GM12878 (cell line): ENCODE measurements at regions of chr12 and their contacts with region 1.

Region 1: DNA sequence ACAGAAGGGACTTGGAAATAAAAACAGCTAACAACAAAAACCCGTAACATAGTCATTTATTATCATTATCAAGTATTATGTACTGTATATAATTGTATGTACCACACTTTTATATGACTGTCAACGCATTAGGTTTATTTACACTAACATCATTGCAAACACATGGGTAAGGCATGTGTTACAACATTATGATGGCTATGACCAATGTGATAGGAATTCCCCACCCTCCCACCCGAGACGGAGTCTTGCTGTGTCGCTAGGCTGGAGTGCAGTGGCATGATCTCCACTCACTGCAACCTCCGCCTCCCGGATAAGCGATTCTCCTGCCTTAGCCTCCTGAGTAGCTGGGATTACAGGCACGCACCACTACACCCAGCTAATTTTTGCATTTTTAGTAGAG is 82.6 kb downstream of the ERC1 start:
- DNase-seq: no peak
- ATAC-seq: no peak
- H3K4me3 ChIP-seq: no peak overlapping the region
- H3K27ac ChIP-seq: no peak overlapping the region
- H3K4me1 ChIP-seq: no peaks in the 10 kb centered on the region; the same call in 1 of the 2 replicates
- H3K27me3 ChIP-seq: peaks cover 0 to 2% of the 10 kb centered on the region in 2 experiments; a peak in 1 of 4 replicates
- CTCF ChIP-seq: no peak
- EP300 ChIP-seq: no peak
- POLR2A ChIP-seq: no peak
- RAD21 ChIP-seq: no peak

Region 2: DNA sequence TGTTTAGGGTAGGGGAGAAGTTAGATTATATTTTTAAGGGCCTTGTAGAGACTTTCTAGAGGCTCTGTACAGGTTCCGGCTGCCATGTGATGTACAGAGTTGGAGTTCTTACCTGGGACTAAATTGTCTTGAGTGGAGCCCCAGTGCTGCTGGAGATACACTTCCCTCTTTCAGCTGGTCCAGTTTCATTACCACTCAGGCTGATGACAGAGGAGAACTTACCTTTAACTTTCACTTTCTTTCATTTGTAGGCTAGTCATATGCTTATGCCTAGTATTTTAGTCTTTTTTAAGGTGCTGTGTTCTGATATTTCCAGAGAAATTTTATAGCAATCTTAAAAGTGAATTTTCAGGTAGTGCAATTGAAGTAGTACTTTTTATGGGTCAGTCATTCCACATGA is 34.6 kb after region 1 on chr12:
- CTCF ChIA-PET with region 1: interaction called, 5 read pairs
- POLR2A ChIA-PET with region 1: no interaction called
- RAD21 ChIA-PET with region 1: no interaction called
- SMC1A ChIA-PET with region 1: interaction called, 7 read pairs
- in situ Hi-C with region 1: no loop called
- intact Hi-C with region 1: loop called (anchors 5 kb)
- DNase-seq: peak; percentile 59
- ATAC-seq: peak; percentile 99
- H3K4me3 ChIP-seq: no peak overlapping the region
- H3K27ac ChIP-seq: no peak overlapping the region
- H3K4me1 ChIP-seq: peaks cover 5% of the 10 kb centered on the region; the same call in 1 of the 2 replicates
- H3K27me3 ChIP-seq: no peaks in the 10 kb centered on the region
- CTCF ChIP-seq: no peak
- EP300 ChIP-seq: 0 out of 4 replicates have a peak, but pooled peaks of 1 of the 2 experiments have one; percentile 35
- POLR2A ChIP-seq: no peak
- RAD21 ChIP-seq: no peak

Region 3: GRCh38 chr12:1398673-1399072 is 325.0 kb after region 1 on chr12:
- CTCF ChIA-PET with region 1: no interaction called
- POLR2A ChIA-PET with region 1: no interaction called
- RAD21 ChIA-PET with region 1: no interaction called
- SMC1A ChIA-PET with region 1: no interaction called
- in situ Hi-C with region 1: no loop called
- intact Hi-C with region 1: no loop called
- DNase-seq: no peak
- ATAC-seq: no peak
- H3K4me3 ChIP-seq: no peak overlapping the region
- H3K27ac ChIP-seq: no peak overlapping the region
- H3K4me1 ChIP-seq: no peaks in the 10 kb centered on the region
- H3K27me3 ChIP-seq: no peaks in the 10 kb centered on the region
- CTCF ChIP-seq: no peak; a peak in 1 of 6 replicates
- EP300 ChIP-seq: no peak
- POLR2A ChIP-seq: no peak
- RAD21 ChIP-seq: peak; percentile 40